ENCODE measurements at regions of chr15 and their contacts with region 1.

Region 1: GRCh38 chr15:79380755-79381497 is 51.2 kb upstream of the MINAR1 start:
- DNase-seq: peak; percentile 19 to 87
- H3K4me3 ChIP-seq: no peak overlapping the region
- H3K27ac ChIP-seq: no peak overlapping the region
- H3K4me1 ChIP-seq: no peaks in the 10 kb centered on the region
- H3K27me3 ChIP-seq: no peaks in the 10 kb centered on the region
- CTCF ChIP-seq: peak; percentile 52 to 91 (median 80)

Region 2: GRCh38 chr15:79431636-79432344 is 50.9 kb after region 1 on chr15 and contains the start of gene MINAR1:
- intact Hi-C with region 1: loop called (anchors 5 kb)
- DNase-seq: no peak
- H3K4me3 ChIP-seq: peak within 1 kb of the TSS; percentile 52 to 69
- H3K27ac ChIP-seq: no peak within 1 kb of the TSS
- H3K4me1 ChIP-seq: peaks cover 4 to 7% of the 10 kb centered on the region in 2 donors
- H3K27me3 ChIP-seq: no peaks in the 10 kb centered on the region
- CTCF ChIP-seq: peak in 1 of 3 experiments; percentile 30
- total RNA-seq, gene MINAR1: 0.21 TPM

Region 3: DNA sequence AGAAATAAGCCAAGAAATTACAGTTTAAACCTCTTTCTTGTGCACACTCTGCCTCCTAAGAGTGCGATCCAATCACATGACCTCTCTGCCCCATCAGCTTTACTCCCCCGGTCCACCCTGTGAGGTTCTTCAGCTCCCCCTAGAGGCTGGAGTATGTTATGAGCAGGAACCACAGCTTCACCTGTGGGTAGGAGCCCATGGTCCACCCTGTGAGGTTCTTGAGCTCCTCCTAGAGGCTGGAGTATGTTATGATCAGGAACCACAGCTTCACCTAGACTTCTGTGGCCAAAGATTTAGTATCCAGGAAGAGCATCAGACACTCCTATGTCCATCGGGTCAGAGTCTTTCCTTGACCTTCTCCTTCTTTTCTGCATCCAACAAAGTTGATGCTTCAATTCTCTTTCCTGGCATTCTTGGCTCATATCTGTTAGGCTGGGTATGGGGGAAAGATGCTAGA is 215.2 kb after region 1 on chr15:
- intact Hi-C with region 1: loop called (anchors 2 kb)
- DNase-seq: no peak
- H3K4me3 ChIP-seq: no peak overlapping the region
- H3K27ac ChIP-seq: no peak overlapping the region
- H3K4me1 ChIP-seq: no peaks in the 10 kb centered on the region
- H3K27me3 ChIP-seq: no peaks in the 10 kb centered on the region
- CTCF ChIP-seq: peak; percentile 19 to 57 (median 41)

Region 4: DNA sequence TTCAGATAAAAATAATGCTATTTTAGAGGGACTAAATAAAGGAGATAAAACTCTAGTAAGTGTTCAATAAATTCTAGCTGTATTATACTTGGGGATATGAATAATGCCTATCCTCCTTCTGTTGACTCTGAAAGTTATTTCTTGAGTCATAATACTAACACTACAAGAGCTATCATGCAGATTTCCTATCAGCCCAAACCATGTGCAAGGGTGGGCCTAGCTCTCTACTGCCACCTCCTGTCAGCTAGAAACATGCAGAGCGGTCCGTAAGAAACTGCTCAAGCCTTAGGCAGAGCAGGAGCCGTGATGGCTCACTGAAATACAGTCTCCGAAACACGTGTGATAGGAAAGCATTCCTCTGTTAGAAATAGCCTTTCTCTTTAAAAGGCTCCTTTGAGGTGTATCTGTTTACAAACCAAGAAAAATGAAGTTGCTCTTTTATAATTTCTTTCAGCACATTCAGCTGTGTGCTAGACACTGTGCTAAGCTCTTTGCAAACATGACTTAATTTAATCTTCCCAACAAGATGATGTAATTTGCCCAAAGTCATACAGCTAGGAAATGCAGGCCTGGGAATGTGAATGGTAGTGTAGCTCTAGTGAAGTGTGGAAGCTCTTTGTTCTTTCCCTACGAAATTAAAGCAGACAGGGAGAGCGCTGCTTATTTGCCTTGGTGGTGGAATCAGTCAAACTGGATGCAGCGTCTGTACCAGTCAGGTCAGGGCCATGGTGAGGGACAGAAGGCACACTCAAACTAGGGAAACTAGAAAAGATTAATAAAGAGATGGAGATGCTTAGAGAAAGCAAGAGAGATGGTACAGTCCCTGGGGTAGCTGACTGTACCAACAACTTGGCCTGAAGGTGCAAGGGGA is 472.8 kb after region 1 on chr15:
- intact Hi-C with region 1: loop called (anchors 2 kb)
- DNase-seq: peak in 1 of 2 donors; percentile 74
- H3K4me3 ChIP-seq: no peak overlapping the region
- H3K27ac ChIP-seq: no peak overlapping the region
- H3K4me1 ChIP-seq: no peaks in the 10 kb centered on the region
- H3K27me3 ChIP-seq: no peaks in the 10 kb centered on the region
- CTCF ChIP-seq: peak; percentile 65 to 93 (median 87)

Region 5: DNA sequence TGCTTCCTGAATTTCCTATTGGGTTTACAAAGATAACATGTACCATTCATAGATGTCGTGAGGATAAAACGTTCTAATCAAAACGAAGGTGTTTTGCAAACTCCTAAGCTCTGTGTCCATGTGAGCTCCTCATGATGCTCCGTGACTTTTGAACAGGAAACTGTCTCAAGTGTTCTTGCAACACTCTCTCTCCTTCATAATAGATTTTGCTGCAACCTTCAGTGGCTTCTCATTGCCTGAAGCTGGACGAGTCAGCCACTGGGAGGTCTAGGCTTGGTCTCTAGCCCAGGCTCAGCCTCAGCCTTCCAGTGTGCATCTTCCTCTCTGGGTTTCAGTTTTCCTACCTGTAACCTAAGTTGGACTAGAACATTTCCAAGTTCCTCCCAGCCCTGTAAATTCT is 608.8 kb after region 1 on chr15:
- intact Hi-C with region 1: loop called (anchors 5 kb)
- DNase-seq: no peak
- H3K4me3 ChIP-seq: no peak overlapping the region
- H3K27ac ChIP-seq: no peak overlapping the region
- H3K4me1 ChIP-seq: no peaks in the 10 kb centered on the region
- H3K27me3 ChIP-seq: no peaks in the 10 kb centered on the region
- CTCF ChIP-seq: no peak

Measured in ascending aorta (tissue), 2 donors.